GM12878 (cell line): ENCODE measurements at regions of chr19 and their contacts with region 1.

Region 1: DNA sequence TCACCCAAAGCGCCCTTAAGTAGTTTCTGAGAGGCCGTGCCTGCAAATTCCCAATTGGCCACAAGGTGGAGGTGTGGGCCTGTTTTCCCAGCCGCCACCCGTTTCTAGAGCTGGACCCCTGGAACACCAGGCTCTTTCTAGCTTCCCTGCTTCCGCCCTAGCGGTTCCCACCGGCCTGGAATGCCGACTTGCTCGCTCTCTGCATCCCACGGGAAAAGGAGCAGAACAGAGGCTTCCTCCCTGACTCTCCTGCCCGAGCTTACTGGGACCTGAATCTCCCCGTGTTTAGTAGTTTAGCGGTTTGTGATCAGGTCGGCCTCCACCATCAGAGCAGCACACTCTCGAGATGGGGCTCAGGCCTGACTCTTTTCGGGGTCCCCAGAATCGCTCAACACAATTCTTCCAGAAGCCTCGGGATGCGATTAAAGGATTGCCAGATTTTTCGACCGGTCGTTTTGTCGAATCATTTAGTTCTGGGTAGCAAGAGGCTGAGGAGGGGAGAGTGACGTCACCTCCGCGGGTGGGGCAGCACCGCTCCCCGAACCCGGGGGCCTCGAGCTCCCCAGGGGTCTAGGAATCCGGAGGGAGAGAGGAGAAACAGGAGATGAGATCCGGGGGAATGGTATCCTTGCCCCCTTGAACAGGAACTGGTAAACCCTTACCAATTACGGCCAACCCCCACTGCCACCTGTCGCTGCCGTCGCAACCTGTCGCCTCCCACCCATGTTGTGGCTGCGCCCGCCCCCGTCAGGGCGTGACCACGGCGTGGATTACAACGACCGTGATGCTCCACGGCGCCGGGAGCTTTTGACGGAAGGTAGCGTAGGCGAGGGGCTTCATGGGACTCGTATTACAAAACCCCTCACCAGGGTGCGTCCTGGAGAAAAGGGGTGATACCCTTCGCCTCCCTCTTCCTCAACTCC is 8.0 kb downstream of the NAPSA start:
- DNase-seq: peak; percentile 46
- ATAC-seq: peak; percentile 80
- H3K4me3 ChIP-seq: peak overlapping the region; percentile 45
- H3K27ac ChIP-seq: peak overlapping the region; percentile 95
- H3K4me1 ChIP-seq: peaks cover 42% of the 10 kb centered on the region
- H3K27me3 ChIP-seq: no peaks in the 10 kb centered on the region
- CTCF ChIP-seq: peak; percentile 79 to 82 (median 79)
- EP300 ChIP-seq: 0 out of 4 replicates have a peak, but pooled peaks of 1 of the 2 experiments have one; percentile 31
- POLR2A ChIP-seq: peak; percentile 70
- RAD21 ChIP-seq: peak; percentile 84

Region 2: GRCh38 chr19:50341091-50341564 is 16.3 kb before region 1 on chr19:
- CTCF ChIA-PET with region 1: interaction called, 29 read pairs
- POLR2A ChIA-PET with region 1: interaction called, 7 read pairs
- RAD21 ChIA-PET with region 1: interaction called, 28 read pairs
- SMC1A ChIA-PET with region 1: interaction called, 26 read pairs
- in situ Hi-C with region 1: no loop called
- intact Hi-C with region 1: no loop called
- DNase-seq: peak; percentile 96
- ATAC-seq: peak; percentile 78
- H3K4me3 ChIP-seq: peak overlapping the region; percentile 90
- H3K27ac ChIP-seq: peak overlapping the region; percentile 95
- H3K4me1 ChIP-seq: peaks cover 20% of the 10 kb centered on the region
- H3K27me3 ChIP-seq: no peaks in the 10 kb centered on the region
- CTCF ChIP-seq: no peak
- EP300 ChIP-seq: peak; percentile 39 to 78; a peak in 3 of 4 replicates
- POLR2A ChIP-seq: peak; percentile 51
- RAD21 ChIP-seq: no peak

Region 3: GRCh38 chr19:50376166-50377050 is 19.0 kb after region 1 on chr19 and contains the start of gene NR1H2:
- CTCF ChIA-PET with region 1: interaction called, 6 read pairs
- POLR2A ChIA-PET with region 1: interaction called, 10 read pairs
- RAD21 ChIA-PET with region 1: interaction called, 8 read pairs
- SMC1A ChIA-PET with region 1: interaction called, 4 read pairs
- in situ Hi-C with region 1: no loop called
- intact Hi-C with region 1: no loop called
- DNase-seq: peak; percentile 90
- ATAC-seq: peak; percentile 95
- H3K4me3 ChIP-seq: peak within 1 kb of the TSS; percentile 79
- H3K27ac ChIP-seq: peak within 1 kb of the TSS; percentile 94
- H3K4me1 ChIP-seq: peaks cover 7% of the 10 kb centered on the region; the same call in 1 of the 2 replicates
- H3K27me3 ChIP-seq: no peaks in the 10 kb centered on the region
- CTCF ChIP-seq: no peak
- EP300 ChIP-seq: peak; percentile 9 to 33; a peak in 2 of 4 replicates
- POLR2A ChIP-seq: peak; percentile 77
- RAD21 ChIP-seq: no peak
- polyA plus RNA-seq, gene NR1H2: 0.05 to 1.3 TPM

Region 4: DNA sequence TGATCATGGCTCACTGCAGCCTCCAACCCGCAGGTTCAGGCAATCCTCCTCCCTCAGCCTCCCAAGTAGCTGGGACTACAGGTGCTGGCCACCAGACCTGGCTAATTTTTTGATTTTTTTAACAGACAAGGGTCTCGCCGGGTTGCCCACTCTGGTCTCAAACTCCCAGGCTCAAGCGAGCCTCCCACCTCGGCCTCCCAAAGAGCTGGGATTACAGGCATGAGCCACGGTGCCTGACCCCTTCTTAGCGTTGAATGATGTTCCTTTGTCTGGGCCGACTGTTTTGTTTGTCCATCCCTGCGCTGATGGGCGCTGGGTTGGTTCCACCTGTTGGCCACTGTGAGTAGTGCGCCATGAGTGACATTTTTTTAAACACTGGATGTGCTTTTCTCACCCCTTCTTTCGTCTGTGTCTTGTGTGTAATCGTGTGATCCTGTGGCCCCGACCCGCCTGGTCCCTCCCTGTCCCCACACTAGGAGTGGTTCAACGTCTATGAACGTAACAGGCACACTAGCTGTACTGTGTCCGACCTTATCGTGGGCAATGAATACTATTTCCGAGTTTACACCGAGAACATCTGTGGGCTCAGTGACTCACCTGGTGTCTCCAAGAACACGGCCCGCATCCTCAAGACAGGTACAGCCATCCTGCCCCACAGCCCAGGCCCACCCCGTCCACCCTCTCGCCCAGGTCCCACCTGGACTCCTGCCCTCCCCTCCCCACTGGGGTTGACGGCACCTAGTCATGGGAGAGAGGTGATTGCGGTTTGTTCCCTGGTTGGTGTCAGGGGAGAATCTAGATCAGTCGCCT is 103.8 kb after region 1 on chr19:
- CTCF ChIA-PET with region 1: interaction called, 167 read pairs
- POLR2A ChIA-PET with region 1: interaction called, 9 read pairs
- RAD21 ChIA-PET with region 1: interaction called, 72 read pairs
- SMC1A ChIA-PET with region 1: interaction called, 68 read pairs
- in situ Hi-C with region 1: no loop called
- intact Hi-C with region 1: loop called (anchors 1 kb)
- DNase-seq: peak; percentile 53
- ATAC-seq: peak; percentile 86
- H3K4me3 ChIP-seq: no peak overlapping the region
- H3K27ac ChIP-seq: peak overlapping the region; percentile 73; the same call in 1 of the 2 replicates
- H3K4me1 ChIP-seq: peaks cover 20% of the 10 kb centered on the region
- H3K27me3 ChIP-seq: no peaks in the 10 kb centered on the region
- CTCF ChIP-seq: peak; percentile 92 to 95 (median 92)
- EP300 ChIP-seq: no peak
- POLR2A ChIP-seq: no peak
- RAD21 ChIP-seq: peak; percentile 92

Region 5: GRCh38 chr19:50556282-50557008 is 199.0 kb after region 1 on chr19:
- CTCF ChIA-PET with region 1: interaction called, 6 read pairs
- POLR2A ChIA-PET with region 1: no interaction called
- RAD21 ChIA-PET with region 1: interaction called, 11 read pairs
- SMC1A ChIA-PET with region 1: no interaction called
- in situ Hi-C with region 1: no loop called
- intact Hi-C with region 1: no loop called
- DNase-seq: peak; percentile 15
- ATAC-seq: peak; percentile 95
- H3K4me3 ChIP-seq: peak overlapping the region; percentile 56; the same call in 1 of the 2 replicates
- H3K27ac ChIP-seq: no peak overlapping the region
- H3K4me1 ChIP-seq: no peaks in the 10 kb centered on the region; the same call in 1 of the 2 replicates
- H3K27me3 ChIP-seq: peaks cover 0 to 5% of the 10 kb centered on the region in 2 experiments
- CTCF ChIP-seq: peak; percentile 74 to 93 (median 85)
- EP300 ChIP-seq: no peak
- POLR2A ChIP-seq: no peak
- RAD21 ChIP-seq: peak; percentile 40; the same call in 1 of the 2 replicates

Region 6: DNA sequence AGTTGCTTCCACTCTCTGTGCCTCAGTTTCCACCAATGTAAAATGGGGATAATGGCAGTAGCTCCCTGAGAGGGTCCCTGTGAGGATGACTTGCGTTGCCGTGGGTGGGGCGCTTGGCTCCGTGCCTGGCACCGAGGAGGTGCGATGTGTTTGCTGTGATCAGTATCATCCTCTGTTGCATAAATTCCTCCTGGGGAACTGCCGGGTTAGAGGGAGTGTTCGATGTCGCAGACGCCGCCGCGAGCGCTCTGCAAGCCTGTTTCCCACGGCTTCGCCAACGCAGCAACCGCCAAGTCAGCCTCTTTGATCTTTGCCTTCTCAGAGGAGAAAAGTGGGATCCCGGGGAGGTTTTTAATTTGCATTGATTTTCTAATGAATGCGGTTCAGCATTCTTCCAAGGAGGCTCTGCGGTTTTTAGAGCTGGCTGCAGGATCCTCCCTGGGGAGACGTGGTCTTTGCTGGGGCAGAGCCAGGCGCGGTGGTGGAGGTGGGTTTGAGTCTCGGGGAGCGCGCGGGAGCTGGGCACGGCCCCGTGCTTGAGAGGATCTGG is 420.4 kb after region 1 on chr19:
- CTCF ChIA-PET with region 1: interaction called, 3 read pairs
- POLR2A ChIA-PET with region 1: no interaction called
- RAD21 ChIA-PET with region 1: interaction called, 3 read pairs
- SMC1A ChIA-PET with region 1: interaction called, 5 read pairs
- in situ Hi-C with region 1: no loop called
- intact Hi-C with region 1: loop called (anchors 1 kb)
- DNase-seq: no peak
- ATAC-seq: no peak
- H3K4me3 ChIP-seq: no peak overlapping the region
- H3K27ac ChIP-seq: no peak overlapping the region
- H3K4me1 ChIP-seq: no peaks in the 10 kb centered on the region
- H3K27me3 ChIP-seq: peaks cover 4 to 8% of the 10 kb centered on the region in 2 experiments
- CTCF ChIP-seq: no peak
- EP300 ChIP-seq: no peak
- POLR2A ChIP-seq: no peak
- RAD21 ChIP-seq: no peak

Region 7: DNA sequence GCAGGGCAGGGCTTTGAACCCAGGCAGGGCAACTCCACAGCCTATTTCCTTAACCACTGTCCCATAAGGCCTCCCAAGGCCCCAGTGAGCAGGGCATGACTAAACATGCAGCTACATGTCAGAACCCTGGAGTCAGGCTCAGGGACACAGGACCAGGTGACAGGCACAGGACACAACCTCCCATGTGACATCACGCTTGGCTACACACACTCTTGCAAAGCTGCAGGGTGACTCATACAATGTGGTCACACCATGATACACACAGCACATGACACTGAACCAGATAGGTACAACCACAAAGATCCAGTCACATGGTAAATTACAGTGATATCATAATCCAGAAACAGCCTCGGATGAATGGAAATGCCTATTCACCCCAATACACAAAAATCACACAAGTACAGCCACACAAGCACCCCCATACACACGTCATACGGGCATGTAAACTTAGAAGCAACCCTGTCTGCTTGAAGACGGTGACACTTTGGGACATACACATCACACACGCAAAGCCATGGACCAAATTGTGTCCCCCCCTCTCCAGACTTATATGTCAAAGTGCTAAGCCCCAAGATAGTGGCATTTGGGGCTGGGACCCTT is 539.3 kb after region 1 on chr19:
- CTCF ChIA-PET with region 1: no interaction called
- POLR2A ChIA-PET with region 1: no interaction called
- RAD21 ChIA-PET with region 1: interaction called, 3 read pairs
- SMC1A ChIA-PET with region 1: no interaction called
- in situ Hi-C with region 1: loop called (anchors 10 kb)
- intact Hi-C with region 1: loop called (anchors 10 kb)
- DNase-seq: peak; percentile 100
- ATAC-seq: peak; percentile 96
- H3K4me3 ChIP-seq: peak overlapping the region; percentile 22; the same call in 1 of the 2 replicates
- H3K27ac ChIP-seq: peak overlapping the region; percentile 76
- H3K4me1 ChIP-seq: peaks cover 23% of the 10 kb centered on the region
- H3K27me3 ChIP-seq: no peaks in the 10 kb centered on the region
- CTCF ChIP-seq: no peak
- EP300 ChIP-seq: peak; percentile 98 to 100
- POLR2A ChIP-seq: peak; percentile 51
- RAD21 ChIP-seq: no peak